T-cell (primary cell): ENCODE measurements at regions of chr1 and their contacts with region 1.

Region 1: DNA sequence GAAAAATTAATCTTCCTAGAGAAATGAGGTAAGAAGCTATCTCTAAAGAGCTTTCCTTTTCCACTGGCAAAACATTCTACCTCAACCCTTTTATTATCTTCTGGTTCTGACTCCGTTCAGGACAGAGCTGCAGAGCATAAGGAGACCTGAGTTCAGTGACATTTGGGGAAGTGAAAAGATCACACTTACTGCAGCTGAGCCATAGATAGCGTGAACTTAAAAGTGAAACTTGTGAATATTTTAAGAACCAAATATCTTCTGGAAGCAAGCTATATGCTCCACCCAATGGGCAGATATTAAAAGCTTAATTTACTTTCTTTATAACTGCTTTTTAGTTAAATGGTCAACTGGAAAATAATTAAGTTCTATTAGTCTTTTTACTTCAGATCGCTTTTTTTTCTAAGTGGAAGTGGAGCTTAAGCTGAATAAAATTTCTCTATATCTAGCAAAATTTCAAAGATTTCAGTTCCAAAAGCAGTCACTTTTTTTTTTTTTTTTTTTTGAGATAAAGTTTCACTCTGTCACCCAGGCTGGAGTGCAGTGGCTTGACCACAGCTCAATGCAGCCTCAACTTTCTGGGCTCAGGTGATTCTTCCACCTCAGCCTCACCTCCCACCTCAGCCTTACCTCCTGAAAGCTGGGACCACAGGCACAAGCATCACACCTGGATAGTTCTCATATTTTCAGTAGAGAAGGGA is 11.9 kb downstream of the PTPN22 start:
- DNase-seq: peak in 1 of 35 experiments; percentile 34
- ATAC-seq: peak in 2 of 4 experiments; percentile 42 to 55
- H3K4me3 ChIP-seq: no peak overlapping the region
- H3K4me3 Mint-ChIP-seq: peak overlapping the region in 1 of 3 donors; percentile 39
- H3K27ac ChIP-seq: peak overlapping the region; percentile 40
- H3K27ac Mint-ChIP-seq: peak overlapping the region; percentile 62 to 83
- H3K4me1 ChIP-seq: peaks cover 10 to 15% of the 10 kb centered on the region in 2 experiments
- H3K4me1 Mint-ChIP-seq: peaks cover 35 to 42% (median 42%) of the 10 kb centered on the region in 3 donors
- H3K27me3 ChIP-seq: no peaks in the 10 kb centered on the region
- H3K27me3 Mint-ChIP-seq: no peaks in the 10 kb centered on the region

Region 2: DNA sequence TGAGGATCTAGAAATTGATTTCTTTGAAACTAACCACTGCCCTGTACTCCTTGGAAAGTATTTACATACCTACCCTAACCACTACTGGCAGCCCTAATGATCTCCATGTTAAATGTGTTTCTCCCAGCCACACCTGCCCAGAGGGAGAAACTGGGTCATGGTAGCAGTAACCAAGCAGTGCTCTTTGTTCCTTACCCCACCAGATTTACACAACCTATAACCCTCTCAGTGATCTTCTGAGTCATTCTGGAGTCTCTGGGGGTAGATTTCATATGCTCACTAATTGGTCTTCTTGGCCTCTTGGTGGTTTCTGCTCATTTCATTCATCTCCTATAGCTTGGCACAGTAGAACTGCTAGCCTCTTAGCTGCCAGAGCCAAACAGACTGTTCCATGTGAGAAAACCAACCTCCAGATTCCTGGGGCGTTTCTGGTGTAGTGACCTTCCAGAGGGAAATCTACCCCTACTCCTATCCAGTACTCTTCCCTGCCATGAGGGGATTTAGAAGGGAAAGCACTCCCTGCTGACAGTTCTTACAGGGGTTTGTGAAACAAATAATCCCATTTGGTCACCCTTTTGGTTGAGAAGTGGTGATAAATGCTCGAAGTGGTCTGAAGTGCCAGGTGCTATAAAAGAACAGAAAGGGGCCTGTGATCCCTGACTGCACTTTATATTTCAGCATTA is 822.8 kb before region 1 on chr1:
- CTCF ChIA-PET with region 1: no interaction called
- POLR2A ChIA-PET with region 1: interaction called in 1 of 2 experiments, 20 read pairs
- DNase-seq: no peak
- ATAC-seq: no peak
- H3K4me3 ChIP-seq: no peak overlapping the region
- H3K4me3 Mint-ChIP-seq: no peak overlapping the region
- H3K27ac ChIP-seq: no peak overlapping the region
- H3K27ac Mint-ChIP-seq: no peak overlapping the region
- H3K4me1 ChIP-seq: no peaks in the 10 kb centered on the region
- H3K4me1 Mint-ChIP-seq: peaks cover 0 to 7% (median 2%) of the 10 kb centered on the region in 3 donors
- H3K27me3 ChIP-seq: no peaks in the 10 kb centered on the region
- H3K27me3 Mint-ChIP-seq: no peaks in the 10 kb centered on the region

Region 3: GRCh38 chr1:113721010-113721409 is 138.6 kb before region 1 on chr1:
- CTCF ChIA-PET with region 1: no interaction called
- POLR2A ChIA-PET with region 1: no interaction called
- DNase-seq: no peak
- ATAC-seq: no peak
- H3K4me3 ChIP-seq: no peak overlapping the region
- H3K4me3 Mint-ChIP-seq: no peak overlapping the region
- H3K27ac ChIP-seq: no peak overlapping the region
- H3K27ac Mint-ChIP-seq: no peak overlapping the region
- H3K4me1 ChIP-seq: no peaks in the 10 kb centered on the region
- H3K4me1 Mint-ChIP-seq: no peaks in the 10 kb centered on the region
- H3K27me3 ChIP-seq: no peaks in the 10 kb centered on the region
- H3K27me3 Mint-ChIP-seq: no peaks in the 10 kb centered on the region

Region 4: GRCh38 chr1:113835642-113836307 is 23.9 kb before region 1 on chr1:
- CTCF ChIA-PET with region 1: interaction called, 6 to 11 read pairs
- POLR2A ChIA-PET with region 1: no interaction called
- DNase-seq: peak in 12 of 35 experiments; percentile 7 to 80 (median 23)
- ATAC-seq: no peak
- H3K4me3 ChIP-seq: no peak overlapping the region
- H3K4me3 Mint-ChIP-seq: no peak overlapping the region
- H3K27ac ChIP-seq: no peak overlapping the region
- H3K27ac Mint-ChIP-seq: peak overlapping the region; percentile 31 to 58
- H3K4me1 ChIP-seq: no peaks in the 10 kb centered on the region
- H3K4me1 Mint-ChIP-seq: peaks cover 5 to 7% (median 5%) of the 10 kb centered on the region in 3 donors
- H3K27me3 ChIP-seq: no peaks in the 10 kb centered on the region
- H3K27me3 Mint-ChIP-seq: no peaks in the 10 kb centered on the region

Region 5: GRCh38 chr1:113874012-113874879 is 14.6 kb after region 1 on chr1:
- CTCF ChIA-PET with region 1: interaction called, 3 read pairs
- POLR2A ChIA-PET with region 1: interaction called, 7 to 18 read pairs
- DNase-seq: peak in 3 of 35 experiments; percentile 4 to 40 (median 8)
- ATAC-seq: peak in 3 of 4 experiments; percentile 47 to 54 (median 50)
- H3K4me3 ChIP-seq: no peak overlapping the region
- H3K4me3 Mint-ChIP-seq: peak overlapping the region in 2 of 3 donors; percentile 11 to 41
- H3K27ac ChIP-seq: peak overlapping the region; percentile 42
- H3K27ac Mint-ChIP-seq: peak overlapping the region; percentile 79 to 89
- H3K4me1 ChIP-seq: peaks cover 35 to 36% of the 10 kb centered on the region in 2 experiments
- H3K4me1 Mint-ChIP-seq: peaks cover 67 to 81% (median 71%) of the 10 kb centered on the region in 3 donors
- H3K27me3 ChIP-seq: no peaks in the 10 kb centered on the region
- H3K27me3 Mint-ChIP-seq: no peaks in the 10 kb centered on the region

Region 6: GRCh38 chr1:113887402-113888175 is 28.0 kb after region 1 on chr1 and contains the start of gene BCL2L15:
- CTCF ChIA-PET with region 1: interaction called in 1 of 2 experiments, 4 read pairs
- POLR2A ChIA-PET with region 1: interaction called in 1 of 2 experiments, 11 read pairs
- DNase-seq: no peak
- ATAC-seq: peak in 1 of 4 experiments; percentile 33
- H3K4me3 ChIP-seq: no peak within 1 kb of the TSS
- H3K4me3 Mint-ChIP-seq: peak within 1 kb of the TSS in 1 of 3 donors; percentile 74
- H3K27ac ChIP-seq: no peak within 1 kb of the TSS
- H3K27ac Mint-ChIP-seq: peak within 1 kb of the TSS; percentile 44 to 76
- H3K4me1 ChIP-seq: peaks cover 2 to 6% of the 10 kb centered on the region in 2 experiments
- H3K4me1 Mint-ChIP-seq: peaks cover 16 to 37% (median 21%) of the 10 kb centered on the region in 3 donors
- H3K27me3 ChIP-seq: no peaks in the 10 kb centered on the region
- H3K27me3 Mint-ChIP-seq: no peaks in the 10 kb centered on the region
- total RNA-seq, gene BCL2L15: 1.2 to 5.8 (median 1.7) TPM